ENCODE measurements at regions of chr10 and their contacts with region 1.

Region 1: DNA sequence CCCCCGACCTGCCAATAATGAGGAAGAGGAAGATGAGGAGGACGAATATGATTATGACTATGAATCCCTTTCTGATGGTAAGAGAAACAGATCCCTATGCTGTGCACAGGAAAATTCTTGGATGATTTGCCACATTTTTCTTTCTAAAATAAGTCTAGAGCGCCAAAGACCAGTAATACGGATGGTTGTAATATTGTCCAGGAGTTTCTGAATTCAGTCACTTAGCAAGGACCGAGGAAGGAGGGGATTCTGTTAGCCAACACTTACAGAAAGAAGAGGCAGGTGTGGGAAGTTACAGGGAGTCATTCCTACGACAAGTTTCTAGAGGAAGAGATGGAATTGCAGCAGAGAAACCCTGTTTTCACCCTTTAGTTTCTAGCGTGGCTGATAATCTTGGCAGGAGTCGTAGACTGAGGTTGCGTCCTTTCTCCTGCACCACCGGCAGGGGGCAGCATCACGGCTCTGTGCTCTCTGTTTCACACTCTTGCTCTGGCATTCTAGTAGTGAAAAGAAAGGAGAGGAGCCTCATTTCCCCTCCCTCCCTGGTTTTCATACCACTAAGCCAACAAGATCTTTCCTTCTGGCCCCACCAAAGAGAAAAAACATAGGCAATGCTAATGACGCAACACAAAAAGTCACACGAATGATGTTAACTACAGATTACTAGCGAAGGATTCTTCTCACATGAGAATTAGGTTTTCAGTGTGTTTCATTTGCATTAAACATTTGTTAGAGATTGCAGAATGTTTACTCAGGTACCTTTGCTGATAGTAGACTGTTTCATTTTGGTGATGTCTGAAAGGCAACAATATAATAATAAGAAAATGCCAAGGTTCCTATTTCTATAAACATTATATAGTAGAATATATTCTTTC is 82.7 kb downstream of the NOC3L start:
- DNase-seq: no peak

Region 2: GRCh38 chr10:93916257-93917063 is 363.6 kb before region 1 on chr10:
- intact Hi-C with region 1: loop called (anchors 5 kb)
- DNase-seq: no peak

Region 3: GRCh38 chr10:93993782-93994437 is 286.2 kb before region 1 on chr10 and contains the start of gene PLCE1:
- intact Hi-C with region 1: loop called (anchors 10 kb)
- DNase-seq: peak; percentile 80
- total RNA-seq, gene PLCE1: 51.5 TPM

Region 4: GRCh38 chr10:94076321-94076841 is 203.7 kb before region 1 on chr10:
- intact Hi-C with region 1: loop called (anchors 5 kb)
- DNase-seq: no peak

Region 5: GRCh38 chr10:94315024-94315451 is 35.0 kb after region 1 on chr10:
- intact Hi-C with region 1: loop called (anchors 5 kb)
- DNase-seq: no peak

Region 6: GRCh38 chr10:94443047-94443446 is 163.0 kb after region 1 on chr10:
- intact Hi-C with region 1: loop called (anchors 10 kb)
- DNase-seq: no peak

Region 7: DNA sequence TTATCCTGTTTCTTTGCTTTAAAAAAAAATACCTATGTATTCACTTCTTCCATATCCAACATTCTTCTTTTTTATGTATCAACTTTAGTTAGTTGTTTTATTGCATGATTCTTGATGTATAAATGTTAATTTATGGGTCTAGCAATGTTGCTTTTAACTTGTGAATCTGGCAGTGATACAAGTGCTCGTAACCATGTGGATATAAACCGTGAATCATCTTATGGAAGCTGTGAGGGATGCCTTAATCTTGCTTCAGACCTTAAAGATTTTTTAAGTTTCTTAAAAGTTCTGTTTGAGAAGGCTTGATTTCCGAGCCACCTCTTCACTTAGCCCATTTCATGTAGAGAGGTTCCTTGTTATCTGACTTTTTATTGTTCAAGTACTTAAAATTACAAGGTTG is 291.5 kb after region 1 on chr10:
- intact Hi-C with region 1: no loop called
- DNase-seq: no peak

Region 8: GRCh38 chr10:94706089-94706488 is 426.0 kb after region 1 on chr10:
- intact Hi-C with region 1: no loop called
- DNase-seq: no peak